Posterior cingulate gyrus (tissue), 11 donors: ENCODE measurements at regions of chr10 and their contacts with region 1.

Region 1: GRCh38 chr10:27155066-27155754 is at the start of gene MASTL:
- DNase-seq: peak; percentile 78 to 99 (median 88)

Region 2: DNA sequence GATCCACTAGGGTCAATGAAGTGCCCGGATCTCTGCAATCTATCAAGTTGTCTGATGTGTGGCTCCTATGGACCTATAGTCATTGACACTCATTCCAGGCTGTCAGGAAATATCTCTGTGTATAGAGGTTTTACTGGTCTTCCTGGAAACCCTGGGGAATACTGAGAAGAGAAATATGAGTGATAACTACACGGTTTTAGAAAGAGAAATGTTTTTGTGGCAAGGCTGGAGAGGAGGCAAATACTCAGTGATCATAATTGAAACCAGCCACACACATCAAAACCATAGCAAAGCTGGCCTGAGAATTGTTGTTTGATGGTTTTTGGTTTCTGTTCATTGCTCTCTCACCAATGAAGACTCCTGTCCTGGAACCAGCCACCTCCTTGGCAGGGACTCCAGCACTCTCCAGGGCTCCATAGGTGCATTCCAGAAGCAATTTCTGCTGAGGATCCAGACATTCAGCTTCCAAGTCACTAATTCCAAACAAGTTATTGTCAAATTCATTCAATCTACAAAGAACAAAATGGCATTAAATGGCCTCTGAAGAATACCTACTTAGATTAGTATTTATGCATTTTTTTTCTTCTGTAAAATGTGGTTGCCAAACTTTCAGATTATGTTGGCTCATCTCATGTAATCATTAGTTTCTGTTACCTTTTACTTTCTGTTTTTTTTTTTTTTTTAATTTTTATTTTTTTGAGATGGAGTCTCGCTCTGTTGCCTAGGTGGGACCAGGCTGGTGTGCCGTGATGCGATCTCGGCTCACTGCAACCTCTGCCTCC is 185.9 kb before region 1 on chr10:
- intact Hi-C with region 1: no loop called
- DNase-seq: no peak

Region 3: DNA sequence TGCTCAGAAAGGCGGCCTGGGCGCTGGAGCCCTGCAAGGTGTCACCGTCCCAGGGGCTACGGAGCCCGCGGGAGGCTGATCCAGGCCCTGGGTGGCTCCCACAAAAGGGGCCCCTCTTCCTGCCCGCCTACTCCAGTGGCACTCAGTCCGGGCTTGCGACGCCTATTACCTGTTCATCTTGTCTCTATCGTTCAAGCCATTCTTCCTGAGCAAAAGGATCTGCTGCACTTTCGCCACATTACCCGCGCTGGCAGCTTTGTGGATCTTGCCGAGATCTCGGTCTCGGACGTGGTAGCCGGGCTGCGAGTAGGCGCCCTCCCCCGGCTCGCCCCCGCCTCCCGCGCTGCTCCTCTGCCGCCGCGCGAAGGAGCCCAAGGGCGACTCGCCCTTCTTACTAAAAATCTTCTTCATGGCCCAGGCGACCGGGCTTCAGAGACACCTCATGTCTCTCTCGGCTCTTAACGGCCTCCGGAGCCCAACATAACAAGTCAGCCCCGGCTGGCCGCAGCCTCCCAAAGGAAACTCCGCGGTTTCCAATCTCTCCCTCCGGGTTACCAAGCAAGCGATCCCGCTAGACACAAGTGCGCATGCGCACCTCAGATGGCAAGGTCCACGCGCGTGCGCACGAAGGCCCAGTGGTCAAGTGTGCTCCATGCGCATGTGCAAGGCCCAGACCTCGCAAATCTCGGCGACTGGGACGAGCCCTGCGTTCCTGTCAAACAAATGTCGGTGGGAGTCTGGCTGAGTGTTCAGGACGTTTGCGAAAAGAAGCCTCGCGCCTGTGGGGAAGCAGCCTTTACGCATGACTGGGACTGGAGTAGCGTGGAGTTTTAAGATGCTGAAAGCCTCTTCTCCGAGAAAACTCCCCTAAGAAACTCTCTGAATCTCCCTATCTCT is 55.0 kb before region 1 on chr10 and contains the start of gene ANKRD26:
- intact Hi-C with region 1: loop called (anchors 5 kb)
- DNase-seq: peak; percentile 92 to 99 (median 94)

Region 4: GRCh38 chr10:27241652-27242472 is 86.7 kb after region 1 on chr10:
- intact Hi-C with region 1: loop called (anchors 2 kb)
- DNase-seq: peak; percentile 81 to 98 (median 88)

Region 5: DNA sequence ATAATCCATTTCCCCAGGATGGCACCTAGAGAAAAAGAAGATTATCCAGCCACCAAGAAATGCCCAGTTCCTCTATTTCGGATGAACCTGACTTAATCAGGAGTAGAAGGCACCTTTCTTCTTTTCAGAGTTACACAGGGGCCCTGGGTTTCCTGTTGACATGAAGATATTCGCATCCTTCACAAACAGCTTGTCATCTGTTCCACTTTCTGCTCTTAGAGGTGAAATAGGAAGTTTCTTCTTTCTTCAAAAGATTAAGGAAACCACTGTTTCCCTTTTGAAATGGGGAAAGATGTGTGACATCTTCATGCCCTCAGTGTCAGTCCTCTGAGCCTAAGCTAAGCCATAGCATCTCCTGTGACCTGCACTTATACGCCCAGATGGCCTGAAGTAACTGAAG is 309.8 kb after region 1 on chr10:
- intact Hi-C with region 1: no loop called
- DNase-seq: no peak